Activated CD4-positive, alpha-beta T cell treated with anti-CD3 and anti-CD28 coated beads, Interleukin-2, amount 10 ng/mL, durations not matched to agents 7 days and 5 days (primary cell): ENCODE measurements at regions of chr2 and their contacts with region 1.

Region 1: DNA sequence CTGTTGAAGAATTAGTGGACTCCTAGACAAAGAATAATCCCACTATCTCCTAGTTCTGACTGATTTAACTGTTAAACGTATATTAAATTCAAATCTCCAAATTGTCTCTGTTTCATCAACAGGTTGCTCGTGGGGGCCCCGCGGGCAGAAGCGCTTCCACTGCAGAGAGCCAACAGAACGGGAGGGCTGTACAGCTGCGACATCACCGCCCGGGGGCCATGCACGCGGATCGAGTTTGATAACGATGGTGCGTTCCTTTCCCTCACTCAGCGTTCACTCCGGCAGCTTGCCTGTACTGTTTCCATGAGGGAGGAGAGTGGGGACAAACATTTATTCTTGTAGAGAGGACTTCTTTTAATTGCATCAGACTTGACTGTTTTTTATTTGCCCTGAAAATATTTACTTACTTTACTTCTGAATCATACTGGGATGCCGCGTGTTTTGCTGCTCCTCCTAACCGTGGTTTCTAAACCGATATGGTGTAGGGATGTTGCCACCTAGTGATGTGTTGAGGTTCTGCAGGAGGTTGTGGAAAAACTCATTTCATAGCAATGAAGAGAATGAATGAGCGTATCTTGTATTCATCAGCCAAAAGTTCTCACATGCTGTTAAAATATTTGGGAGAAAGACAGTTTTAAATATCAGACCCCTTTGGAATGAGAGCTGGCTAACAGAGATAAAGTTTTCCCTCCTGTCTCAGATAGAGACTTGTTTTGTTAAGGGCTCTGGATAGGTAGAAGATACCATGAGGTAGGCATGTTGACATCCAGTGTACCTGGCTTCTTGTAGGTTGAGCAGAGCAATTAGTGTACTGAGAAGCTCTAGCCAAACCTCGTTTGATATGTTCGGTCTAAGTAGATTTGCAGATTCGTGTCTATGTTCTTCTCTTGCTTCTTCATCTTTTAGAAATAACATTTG is 38.3 kb downstream of the ITGA6 start:
- DNase-seq: peak; percentile 81
- H3K4me3 Mint-ChIP-seq: peak overlapping the region; percentile 0
- H3K27ac Mint-ChIP-seq: peak overlapping the region; percentile 63
- H3K4me1 Mint-ChIP-seq: peaks cover 67% of the 10 kb centered on the region
- H3K27me3 Mint-ChIP-seq: no peaks in the 10 kb centered on the region

Region 2: GRCh38 chr2:172172513-172173173 is 293.0 kb before region 1 on chr2:
- CTCF ChIA-PET with region 1: interaction called, 15 read pairs
- POLR2A ChIA-PET with region 1: no interaction called
- DNase-seq: peak; percentile 51
- H3K4me3 Mint-ChIP-seq: peak overlapping the region; percentile 58
- H3K27ac Mint-ChIP-seq: no peak overlapping the region
- H3K4me1 Mint-ChIP-seq: no peaks in the 10 kb centered on the region
- H3K27me3 Mint-ChIP-seq: peaks cover 31% of the 10 kb centered on the region

Region 3: DNA sequence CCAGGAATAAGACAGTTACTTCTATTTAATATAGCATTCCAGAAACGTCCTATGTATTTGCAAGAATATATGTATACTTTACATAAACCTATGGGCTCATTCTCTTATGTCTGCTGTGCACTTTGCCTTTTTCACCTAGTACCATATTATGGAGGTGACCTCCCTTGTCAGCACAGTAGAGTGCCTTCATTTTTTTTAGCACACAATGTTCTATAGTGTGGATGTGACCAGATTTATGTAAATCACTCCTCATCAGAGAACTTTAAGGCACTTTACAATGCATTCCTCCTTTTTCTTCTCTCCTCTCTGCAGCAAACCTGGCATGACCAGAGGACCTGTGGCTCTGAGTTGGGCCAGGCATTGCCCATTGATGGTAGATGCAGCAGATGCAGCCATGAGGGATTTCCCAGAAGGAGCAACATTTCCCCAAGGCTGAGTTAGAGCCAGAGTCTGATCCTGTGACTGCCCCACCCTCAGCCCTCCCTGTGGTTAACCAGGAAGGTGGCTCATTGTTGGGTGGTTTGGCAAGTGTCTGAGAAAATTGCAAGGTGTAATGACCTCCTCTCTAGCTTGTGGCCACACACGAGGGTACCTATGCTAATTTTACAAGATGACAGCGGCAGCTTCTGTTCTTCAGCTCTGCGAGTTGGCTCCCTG is 286.5 kb before region 1 on chr2:
- CTCF ChIA-PET with region 1: interaction called, 15 read pairs
- POLR2A ChIA-PET with region 1: no interaction called
- DNase-seq: no peak
- H3K4me3 Mint-ChIP-seq: no peak overlapping the region
- H3K27ac Mint-ChIP-seq: no peak overlapping the region
- H3K4me1 Mint-ChIP-seq: peaks cover 23% of the 10 kb centered on the region
- H3K27me3 Mint-ChIP-seq: peaks cover 8% of the 10 kb centered on the region

Region 4: GRCh38 chr2:172427256-172427989 is 38.3 kb before region 1 on chr2 and contains the start of gene ITGA6:
- CTCF ChIA-PET with region 1: interaction called, 36 read pairs
- POLR2A ChIA-PET with region 1: no interaction called
- DNase-seq: peak; percentile 73
- H3K4me3 Mint-ChIP-seq: peak within 1 kb of the TSS; percentile 83
- H3K27ac Mint-ChIP-seq: peak within 1 kb of the TSS; percentile 76
- H3K4me1 Mint-ChIP-seq: peaks cover 65% of the 10 kb centered on the region
- H3K27me3 Mint-ChIP-seq: peaks cover 34% of the 10 kb centered on the region
- total RNA-seq, gene ITGA6: 46.7 to 47.2 TPM

Region 5: DNA sequence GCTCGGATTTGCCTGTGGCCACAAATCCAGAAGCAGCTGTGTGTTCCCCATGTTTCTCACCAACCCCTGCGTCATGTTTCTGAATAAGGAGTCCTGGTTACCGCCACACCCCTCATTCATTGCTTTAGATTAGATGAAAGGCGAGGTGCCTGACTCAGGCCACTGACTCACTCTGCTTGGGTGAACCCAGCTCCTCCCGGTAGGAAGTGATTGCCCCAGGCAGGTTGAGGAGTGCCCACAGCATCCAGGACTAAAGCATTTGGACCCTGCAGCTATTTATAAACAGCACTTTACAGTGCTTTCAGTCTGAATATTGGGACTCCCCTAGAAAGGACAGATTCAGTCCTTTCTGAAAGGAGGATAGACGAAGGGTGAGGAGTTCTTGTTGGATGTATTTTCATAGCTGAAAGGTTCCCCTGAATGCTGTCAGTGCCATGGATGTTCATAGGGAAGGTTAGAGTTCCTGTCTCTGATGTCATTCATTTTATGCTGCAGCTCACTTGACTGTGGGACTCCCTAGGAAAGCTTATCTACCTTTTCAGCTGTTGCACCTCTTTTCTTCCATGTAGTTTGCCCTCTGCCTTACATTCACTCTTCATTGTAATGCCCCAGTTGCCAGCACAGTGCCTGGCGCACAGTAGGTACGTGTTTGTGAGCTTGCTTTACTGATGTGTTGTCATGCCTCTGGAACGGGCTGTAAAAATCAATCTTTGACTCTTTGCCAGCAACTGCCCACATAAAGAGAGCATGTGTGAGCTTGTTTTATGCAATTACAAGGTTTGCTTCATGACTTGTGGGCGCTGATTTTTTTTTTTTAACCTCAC is 23.4 kb before region 1 on chr2:
- CTCF ChIA-PET with region 1: interaction called, 60 read pairs
- POLR2A ChIA-PET with region 1: interaction called, 4 read pairs
- DNase-seq: peak; percentile 32
- H3K4me3 Mint-ChIP-seq: peak overlapping the region; percentile 48
- H3K27ac Mint-ChIP-seq: peak overlapping the region; percentile 54
- H3K4me1 Mint-ChIP-seq: peaks cover 43% of the 10 kb centered on the region
- H3K27me3 Mint-ChIP-seq: peaks cover 3% of the 10 kb centered on the region

Region 6: DNA sequence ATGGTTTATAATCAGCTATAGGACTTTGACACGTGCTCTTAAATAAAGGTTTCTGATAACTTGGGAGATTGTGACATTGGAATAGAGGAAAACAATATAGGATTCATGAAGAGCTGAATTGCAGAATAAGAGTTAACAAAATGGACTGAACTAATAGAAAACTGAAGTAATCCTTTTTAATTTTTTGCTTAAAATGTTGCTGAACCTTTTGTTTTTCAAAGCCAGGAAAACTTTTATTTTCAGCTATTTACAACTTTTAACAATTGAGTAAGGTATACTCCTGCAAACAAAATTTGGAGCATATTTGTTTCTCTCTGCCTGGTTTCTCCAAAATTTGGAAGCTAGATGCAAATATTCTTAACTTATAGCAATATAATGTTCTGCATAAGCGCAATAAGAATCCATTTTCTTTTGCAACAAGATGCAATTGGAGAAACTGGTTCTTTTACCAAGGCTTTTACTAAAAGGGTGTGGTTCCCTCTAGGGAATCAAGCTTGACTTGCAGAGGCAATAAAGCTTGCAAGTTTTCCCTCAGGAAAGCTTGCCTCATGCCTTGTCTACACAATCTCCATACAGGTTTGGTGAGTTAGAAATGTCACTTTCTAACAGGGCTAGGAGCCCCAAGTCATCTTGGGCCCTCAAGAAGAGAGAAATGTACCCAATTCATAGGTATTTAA is 79.9 kb after region 1 on chr2:
- CTCF ChIA-PET with region 1: no interaction called
- POLR2A ChIA-PET with region 1: no interaction called
- DNase-seq: no peak
- H3K4me3 Mint-ChIP-seq: no peak overlapping the region
- H3K27ac Mint-ChIP-seq: no peak overlapping the region
- H3K4me1 Mint-ChIP-seq: peaks cover 18% of the 10 kb centered on the region
- H3K27me3 Mint-ChIP-seq: peaks cover 1% of the 10 kb centered on the region

Region 7: GRCh38 chr2:172655091-172655837 is 189.6 kb after region 1 on chr2:
- CTCF ChIA-PET with region 1: no interaction called
- POLR2A ChIA-PET with region 1: no interaction called
- DNase-seq: no peak
- H3K4me3 Mint-ChIP-seq: no peak overlapping the region
- H3K27ac Mint-ChIP-seq: no peak overlapping the region
- H3K4me1 Mint-ChIP-seq: no peaks in the 10 kb centered on the region
- H3K27me3 Mint-ChIP-seq: peaks cover 2% of the 10 kb centered on the region

Region 8: GRCh38 chr2:172674034-172674967 is 208.6 kb after region 1 on chr2:
- CTCF ChIA-PET with region 1: no interaction called
- POLR2A ChIA-PET with region 1: no interaction called
- DNase-seq: peak; percentile 25
- H3K4me3 Mint-ChIP-seq: no peak overlapping the region
- H3K27ac Mint-ChIP-seq: no peak overlapping the region
- H3K4me1 Mint-ChIP-seq: peaks cover 3% of the 10 kb centered on the region
- H3K27me3 Mint-ChIP-seq: peaks cover 2% of the 10 kb centered on the region

Region 9: DNA sequence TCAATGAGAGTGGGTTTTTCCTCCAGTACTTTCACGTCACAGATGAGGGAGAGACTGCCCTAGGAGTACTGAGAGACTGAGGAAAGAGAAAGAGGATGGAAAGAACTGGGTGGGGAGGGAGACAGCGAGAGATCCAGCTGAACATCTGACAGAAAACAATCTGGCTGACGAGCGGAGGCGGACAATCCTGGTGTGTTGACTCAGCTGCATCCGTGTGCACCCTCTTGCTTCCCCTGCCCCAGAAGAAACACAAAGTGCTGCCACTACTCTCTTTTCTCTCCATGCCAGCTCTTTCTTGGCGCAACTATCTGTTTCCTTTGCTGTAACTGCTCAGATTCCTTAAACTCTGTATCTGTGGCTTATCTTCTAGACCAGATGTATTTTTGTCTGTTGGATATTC is 277.5 kb after region 1 on chr2:
- CTCF ChIA-PET with region 1: no interaction called
- POLR2A ChIA-PET with region 1: no interaction called
- DNase-seq: no peak
- H3K4me3 Mint-ChIP-seq: no peak overlapping the region
- H3K27ac Mint-ChIP-seq: no peak overlapping the region
- H3K4me1 Mint-ChIP-seq: no peaks in the 10 kb centered on the region
- H3K27me3 Mint-ChIP-seq: peaks cover 26% of the 10 kb centered on the region